CD8-positive, alpha-beta T cell (primary cell): ENCODE measurements at regions of chr17 and their contacts with region 1.

Region 1: GRCh38 chr17:14437176-14437575 is 136.3 kb downstream of the HS3ST3B1 start:
- DNase-seq: no peak
- ATAC-seq: no peak
- H3K4me3 ChIP-seq: no peak overlapping the region
- H3K4me3 Mint-ChIP-seq: no peak overlapping the region
- H3K27ac ChIP-seq: no peak overlapping the region
- H3K27ac Mint-ChIP-seq: no peak overlapping the region
- H3K4me1 ChIP-seq: no peaks in the 10 kb centered on the region
- H3K4me1 Mint-ChIP-seq: peaks cover 4% of the 10 kb centered on the region
- H3K27me3 ChIP-seq: no peaks in the 10 kb centered on the region
- H3K27me3 Mint-ChIP-seq: no peaks in the 10 kb centered on the region
- CTCF ChIP-seq: no peak

Region 2: DNA sequence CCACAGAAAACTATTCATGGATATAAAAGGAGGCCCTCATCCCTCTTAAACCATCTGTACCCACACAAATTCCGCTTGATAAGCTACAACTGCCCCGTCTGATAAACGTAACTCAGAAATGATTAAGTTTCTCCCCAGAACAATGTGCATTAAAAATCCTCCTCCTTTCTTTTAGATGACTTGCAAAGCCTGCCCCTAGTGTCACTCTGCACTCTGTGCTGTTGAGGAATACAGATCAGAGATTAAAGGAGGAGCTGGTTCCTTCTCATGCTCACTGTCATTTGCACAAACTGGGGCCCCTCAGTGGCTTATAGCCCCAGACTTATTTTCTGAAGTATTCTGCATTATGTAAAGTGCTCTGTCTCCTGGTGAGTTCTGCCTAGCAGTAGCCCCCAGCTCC is 233.8 kb before region 1 on chr17:
- CTCF ChIA-PET with region 1: no interaction called
- POLR2A ChIA-PET with region 1: no interaction called
- intact Hi-C with region 1: no loop called
- DNase-seq: peak in 5 of 9 experiments; percentile 41 to 70 (median 56)
- ATAC-seq: peak; percentile 40
- H3K4me3 ChIP-seq: no peak overlapping the region
- H3K4me3 Mint-ChIP-seq: no peak overlapping the region
- H3K27ac ChIP-seq: peak overlapping the region; percentile 34 to 66
- H3K27ac Mint-ChIP-seq: peak overlapping the region; percentile 81
- H3K4me1 ChIP-seq: peaks cover 85% of the 10 kb centered on the region
- H3K4me1 Mint-ChIP-seq: peaks cover 83% of the 10 kb centered on the region
- H3K27me3 ChIP-seq: no peaks in the 10 kb centered on the region
- H3K27me3 Mint-ChIP-seq: no peaks in the 10 kb centered on the region
- CTCF ChIP-seq: peak; percentile 63

Region 3: DNA sequence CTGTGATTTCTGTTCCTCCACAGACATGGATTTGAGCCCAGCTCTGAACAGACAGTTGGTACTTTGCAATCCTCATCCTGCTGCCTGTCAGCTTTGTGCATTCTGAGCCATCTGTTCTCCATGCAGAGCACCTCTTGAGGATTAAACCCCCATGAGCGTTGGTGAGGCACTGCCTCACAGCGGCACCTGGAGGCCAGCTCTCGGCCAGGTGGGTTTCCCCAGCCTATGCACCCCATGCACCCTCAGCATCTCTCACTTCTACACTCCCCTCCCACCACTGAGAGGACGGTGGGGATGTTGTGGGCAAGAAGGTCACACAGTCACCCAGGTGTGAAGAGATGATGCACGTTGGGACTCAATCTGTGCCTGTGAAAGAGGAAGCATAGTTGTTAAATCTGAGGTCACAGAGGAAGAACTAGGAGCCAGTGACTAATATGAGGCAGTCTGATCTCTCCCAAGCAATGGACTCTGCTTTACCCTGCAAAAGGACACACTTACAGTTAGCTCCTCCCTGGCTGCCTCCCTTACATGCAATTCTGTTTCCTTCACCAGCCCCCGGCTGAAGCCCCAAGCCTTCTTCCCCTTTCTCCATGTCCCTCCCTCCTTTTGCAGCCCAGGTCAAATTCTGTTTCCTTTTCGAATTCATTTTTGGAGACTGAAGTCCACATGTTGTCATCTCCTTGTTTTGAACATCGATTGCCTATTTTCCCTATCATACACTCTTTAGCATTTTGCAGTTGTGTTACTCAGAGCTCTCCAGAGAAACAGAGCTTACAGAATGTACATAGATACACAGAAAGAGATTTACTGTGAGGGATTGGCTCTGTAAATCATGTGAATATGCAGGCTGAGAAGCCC is 77.8 kb before region 1 on chr17:
- CTCF ChIA-PET with region 1: no interaction called
- POLR2A ChIA-PET with region 1: no interaction called
- intact Hi-C with region 1: no loop called
- DNase-seq: peak in 8 of 9 experiments; percentile 1 to 88 (median 46)
- ATAC-seq: peak; percentile 91
- H3K4me3 ChIP-seq: no peak overlapping the region
- H3K4me3 Mint-ChIP-seq: no peak overlapping the region
- H3K27ac ChIP-seq: no peak overlapping the region
- H3K27ac Mint-ChIP-seq: no peak overlapping the region
- H3K4me1 ChIP-seq: peaks cover 14% of the 10 kb centered on the region
- H3K4me1 Mint-ChIP-seq: peaks cover 15% of the 10 kb centered on the region
- H3K27me3 ChIP-seq: no peaks in the 10 kb centered on the region
- H3K27me3 Mint-ChIP-seq: no peaks in the 10 kb centered on the region
- CTCF ChIP-seq: no peak

Region 4: GRCh38 chr17:14396547-14396946 is 40.6 kb before region 1 on chr17:
- CTCF ChIA-PET with region 1: no interaction called
- POLR2A ChIA-PET with region 1: no interaction called
- intact Hi-C with region 1: loop called in 1 of 2 experiments (anchors 5 kb)
- DNase-seq: no peak
- ATAC-seq: no peak
- H3K4me3 ChIP-seq: no peak overlapping the region
- H3K4me3 Mint-ChIP-seq: no peak overlapping the region
- H3K27ac ChIP-seq: no peak overlapping the region
- H3K27ac Mint-ChIP-seq: no peak overlapping the region
- H3K4me1 ChIP-seq: no peaks in the 10 kb centered on the region
- H3K4me1 Mint-ChIP-seq: no peaks in the 10 kb centered on the region
- H3K27me3 ChIP-seq: no peaks in the 10 kb centered on the region
- H3K27me3 Mint-ChIP-seq: no peaks in the 10 kb centered on the region
- CTCF ChIP-seq: no peak

Region 5: DNA sequence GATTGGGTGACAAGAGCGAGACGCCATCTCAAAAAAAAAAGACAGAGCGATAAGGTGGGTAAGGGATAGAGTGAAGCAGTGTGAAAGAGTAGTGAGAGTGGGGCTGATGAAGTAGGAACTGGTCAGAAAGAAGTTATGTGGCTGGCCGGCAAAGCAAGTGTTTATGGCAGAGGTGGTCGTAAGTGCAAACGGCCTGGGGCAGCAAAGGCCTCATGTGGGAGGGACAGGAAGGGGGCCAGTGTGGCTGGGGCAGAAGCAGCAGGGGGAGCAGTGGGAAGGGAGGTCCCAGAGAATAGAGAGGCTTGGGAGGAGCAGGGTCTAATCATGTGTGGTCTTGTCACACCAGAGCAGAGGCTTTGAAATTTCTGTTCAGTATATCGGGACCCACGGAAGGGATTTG is 49.9 kb after region 1 on chr17:
- CTCF ChIA-PET with region 1: no interaction called
- POLR2A ChIA-PET with region 1: no interaction called
- intact Hi-C with region 1: no loop called
- DNase-seq: no peak
- ATAC-seq: no peak
- H3K4me3 ChIP-seq: no peak overlapping the region
- H3K4me3 Mint-ChIP-seq: no peak overlapping the region
- H3K27ac ChIP-seq: no peak overlapping the region
- H3K27ac Mint-ChIP-seq: no peak overlapping the region
- H3K4me1 ChIP-seq: no peaks in the 10 kb centered on the region
- H3K4me1 Mint-ChIP-seq: no peaks in the 10 kb centered on the region
- H3K27me3 ChIP-seq: no peaks in the 10 kb centered on the region
- H3K27me3 Mint-ChIP-seq: no peaks in the 10 kb centered on the region
- CTCF ChIP-seq: no peak